ENCODE measurements at regions of chr14 and their contacts with region 1.

Region 1: DNA sequence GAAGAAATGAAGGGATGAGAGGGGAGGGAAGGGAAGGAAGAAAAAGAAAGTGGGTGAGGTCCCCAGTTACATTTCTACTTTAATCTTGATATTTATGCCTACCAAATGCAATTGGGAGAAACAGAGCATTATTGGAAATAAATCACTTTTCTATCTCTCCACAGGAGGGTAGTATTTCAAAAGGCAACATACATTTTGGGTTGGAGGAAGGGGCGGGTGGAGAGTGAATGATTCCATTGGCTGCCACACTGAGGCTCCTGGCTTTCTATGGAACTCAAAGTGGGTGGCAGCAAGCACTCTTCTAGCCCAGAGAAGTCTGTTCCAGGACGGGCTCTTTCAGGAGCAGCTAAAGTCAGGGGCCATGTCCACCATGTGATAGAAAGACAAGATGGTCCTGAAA is 441.3 kb downstream of the DAD1 start:
- DNase-seq: peak; percentile 22
- ATAC-seq: peak; percentile 36
- H3K4me3 Mint-ChIP-seq: peak overlapping the region; percentile 70
- H3K27ac Mint-ChIP-seq: peak overlapping the region; percentile 60
- H3K4me1 Mint-ChIP-seq: peaks cover 13% of the 10 kb centered on the region
- H3K27me3 Mint-ChIP-seq: no peaks in the 10 kb centered on the region

Region 2: GRCh38 chr14:22039938-22040775 is 107.5 kb before region 1 on chr14:
- CTCF ChIA-PET with region 1: no interaction called
- POLR2A ChIA-PET with region 1: no interaction called
- DNase-seq: peak; percentile 71
- ATAC-seq: peak; percentile 91
- H3K4me3 Mint-ChIP-seq: peak overlapping the region; percentile 76
- H3K27ac Mint-ChIP-seq: peak overlapping the region; percentile 81
- H3K4me1 Mint-ChIP-seq: peaks cover 19% of the 10 kb centered on the region
- H3K27me3 Mint-ChIP-seq: peaks cover 6% of the 10 kb centered on the region

Region 3: GRCh38 chr14:22131749-22132476 is 15.8 kb before region 1 on chr14:
- CTCF ChIA-PET with region 1: interaction called, 11 read pairs
- POLR2A ChIA-PET with region 1: no interaction called
- DNase-seq: peak; percentile 46
- ATAC-seq: no peak
- H3K4me3 Mint-ChIP-seq: no peak overlapping the region
- H3K27ac Mint-ChIP-seq: no peak overlapping the region
- H3K4me1 Mint-ChIP-seq: peaks cover 7% of the 10 kb centered on the region
- H3K27me3 Mint-ChIP-seq: no peaks in the 10 kb centered on the region

Measured in activated CD8-positive, alpha-beta T cell treated with anti-CD3 and anti-CD28 coated beads, Interleukin-2, amount 10 ng/mL, durations not matched to agents 7 days and 5 days (primary cell).